Activated B cell treated with CpG ODN at 0.5 μM for 24 hours (primary cell): ENCODE measurements at regions of chr20 and their contacts with region 1.

Region 1: GRCh38 chr20:59159493-59160376 is 3.9 kb upstream of the ZNF831 start:
- DNase-seq: no peak
- ATAC-seq: peak; percentile 33
- H3K4me3 Mint-ChIP-seq: peak overlapping the region; percentile 65
- H3K27ac Mint-ChIP-seq: peak overlapping the region; percentile 37
- H3K4me1 Mint-ChIP-seq: peaks cover 57% of the 10 kb centered on the region
- H3K27me3 Mint-ChIP-seq: no peaks in the 10 kb centered on the region
- CTCF ChIP-seq: no peak

Region 2: GRCh38 chr20:58888521-58889333 is 271.0 kb before region 1 on chr20:
- CTCF ChIA-PET with region 1: no interaction called
- POLR2A ChIA-PET with region 1: interaction called, 3 read pairs
- intact Hi-C with region 1: loop called (anchors 1 kb)
- DNase-seq: peak; percentile 73
- ATAC-seq: peak; percentile 45
- H3K4me3 Mint-ChIP-seq: peak overlapping the region; percentile 84
- H3K27ac Mint-ChIP-seq: peak overlapping the region; percentile 59
- H3K4me1 Mint-ChIP-seq: peaks cover 27% of the 10 kb centered on the region
- H3K27me3 Mint-ChIP-seq: no peaks in the 10 kb centered on the region
- CTCF ChIP-seq: no peak

Region 3: DNA sequence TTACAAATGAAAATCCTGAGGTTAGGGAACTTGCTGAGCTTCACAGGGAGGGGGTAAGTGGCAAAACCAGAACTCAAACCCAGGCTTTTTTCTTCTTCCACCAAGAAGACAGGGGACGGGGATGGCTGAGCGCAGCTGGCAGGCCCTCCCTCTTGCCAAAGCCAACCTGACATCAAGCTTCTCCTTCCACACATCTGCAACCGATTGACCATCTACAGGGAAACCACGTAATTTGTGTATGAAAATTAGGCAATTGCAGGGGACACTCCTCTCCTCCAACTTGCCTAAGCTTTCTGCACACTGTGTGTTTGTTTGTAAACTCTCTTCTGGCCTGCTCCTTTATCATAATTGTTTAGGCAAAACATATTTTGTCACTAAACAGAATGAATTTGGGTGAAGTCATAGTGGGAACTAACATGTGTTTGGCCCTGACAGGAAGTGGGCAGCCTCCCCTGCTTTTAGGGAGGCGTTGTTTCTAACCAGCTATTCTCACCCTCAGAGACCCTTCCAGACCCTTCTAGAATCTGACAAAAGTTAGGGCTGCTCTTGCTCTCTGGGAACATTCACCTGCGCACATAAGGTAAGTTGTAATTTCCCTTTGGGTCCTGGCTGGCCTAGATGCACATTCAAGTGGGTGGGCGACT is 22.8 kb after region 1 on chr20:
- CTCF ChIA-PET with region 1: no interaction called
- POLR2A ChIA-PET with region 1: interaction called, 6 read pairs
- intact Hi-C with region 1: loop called (anchors 2 kb)
- DNase-seq: no peak
- ATAC-seq: peak; percentile 76
- H3K4me3 Mint-ChIP-seq: peak overlapping the region; percentile 38
- H3K27ac Mint-ChIP-seq: no peak overlapping the region
- H3K4me1 Mint-ChIP-seq: peaks cover 48% of the 10 kb centered on the region
- H3K27me3 Mint-ChIP-seq: no peaks in the 10 kb centered on the region
- CTCF ChIP-seq: no peak

Region 4: DNA sequence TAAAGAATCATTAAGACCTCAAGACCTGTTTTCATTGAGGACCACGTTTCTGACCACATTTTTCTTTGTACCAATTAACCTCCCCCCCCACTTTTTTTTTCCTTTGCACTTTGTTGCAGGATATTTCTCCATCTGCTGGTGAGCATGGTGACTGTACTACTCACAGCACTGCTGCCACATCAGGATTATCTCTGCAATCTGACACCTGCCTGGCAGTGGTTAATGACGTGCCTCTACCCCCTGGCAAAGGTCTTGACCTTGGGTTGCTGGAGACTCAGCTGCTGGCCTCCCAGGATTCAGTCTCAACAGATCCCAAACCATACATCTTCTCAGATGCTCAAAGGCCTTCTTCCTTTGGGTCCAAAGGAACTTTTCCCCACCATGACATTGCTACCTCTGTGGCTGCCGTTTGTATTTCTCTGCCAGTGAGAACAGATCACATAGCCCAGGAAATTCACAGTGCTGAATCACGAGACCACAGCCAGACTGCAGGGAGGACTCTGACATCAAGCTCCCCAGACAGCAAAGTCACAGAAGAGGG is 94.1 kb after region 1 on chr20:
- CTCF ChIA-PET with region 1: no interaction called
- POLR2A ChIA-PET with region 1: no interaction called
- intact Hi-C with region 1: no loop called
- DNase-seq: no peak
- ATAC-seq: no peak
- H3K4me3 Mint-ChIP-seq: no peak overlapping the region
- H3K27ac Mint-ChIP-seq: peak overlapping the region; percentile 33
- H3K4me1 Mint-ChIP-seq: peaks cover 26% of the 10 kb centered on the region
- H3K27me3 Mint-ChIP-seq: no peaks in the 10 kb centered on the region
- CTCF ChIP-seq: no peak